ENCODE measurements at regions of chr19 and their contacts with region 1.

Region 1: DNA sequence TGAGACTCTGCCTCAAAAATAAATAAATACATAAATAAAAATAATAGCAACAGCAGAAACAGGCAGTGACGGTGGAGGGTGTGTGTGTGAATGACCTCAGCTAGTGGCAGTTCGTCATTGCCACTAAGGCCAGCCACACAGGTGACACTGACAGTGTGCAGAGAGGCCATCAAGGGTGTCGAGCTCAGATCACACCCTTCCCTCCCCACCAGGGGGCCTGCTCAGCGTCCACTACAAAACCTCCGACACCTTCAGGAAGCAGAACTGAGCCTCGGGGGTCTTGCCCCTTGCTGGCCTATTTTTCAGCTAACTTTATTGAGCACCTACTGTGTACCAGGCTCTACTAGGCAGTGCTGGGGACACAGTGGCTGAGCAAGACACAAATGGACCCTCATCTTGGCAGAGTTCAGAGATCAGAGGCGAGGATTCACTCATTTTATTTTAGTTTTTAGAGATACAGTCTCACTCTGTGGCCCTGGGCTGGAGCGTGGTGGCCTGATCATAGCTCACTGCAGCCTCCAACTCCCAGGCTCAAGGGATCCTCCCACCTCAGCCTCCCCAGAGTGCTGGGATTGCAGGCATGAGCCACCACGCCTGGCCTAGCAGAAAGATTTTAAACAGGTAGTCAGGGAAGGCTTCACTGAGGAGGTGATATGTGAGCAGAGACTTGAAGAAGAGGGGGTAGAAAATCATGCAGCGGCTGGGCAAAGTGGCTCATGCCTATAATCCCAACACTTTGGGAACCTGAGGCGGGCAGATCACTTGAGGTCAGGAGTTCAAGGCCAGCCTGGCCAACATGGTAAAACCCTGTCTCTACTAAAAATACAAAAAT is 30.3 kb upstream of the SEMA6B start:
- DNase-seq: peak; percentile 46
- H3K4me3 Mint-ChIP-seq: no peak overlapping the region
- H3K27ac Mint-ChIP-seq: no peak overlapping the region
- H3K4me1 Mint-ChIP-seq: no peaks in the 10 kb centered on the region
- H3K27me3 Mint-ChIP-seq: peaks cover 54% of the 10 kb centered on the region

Region 2: DNA sequence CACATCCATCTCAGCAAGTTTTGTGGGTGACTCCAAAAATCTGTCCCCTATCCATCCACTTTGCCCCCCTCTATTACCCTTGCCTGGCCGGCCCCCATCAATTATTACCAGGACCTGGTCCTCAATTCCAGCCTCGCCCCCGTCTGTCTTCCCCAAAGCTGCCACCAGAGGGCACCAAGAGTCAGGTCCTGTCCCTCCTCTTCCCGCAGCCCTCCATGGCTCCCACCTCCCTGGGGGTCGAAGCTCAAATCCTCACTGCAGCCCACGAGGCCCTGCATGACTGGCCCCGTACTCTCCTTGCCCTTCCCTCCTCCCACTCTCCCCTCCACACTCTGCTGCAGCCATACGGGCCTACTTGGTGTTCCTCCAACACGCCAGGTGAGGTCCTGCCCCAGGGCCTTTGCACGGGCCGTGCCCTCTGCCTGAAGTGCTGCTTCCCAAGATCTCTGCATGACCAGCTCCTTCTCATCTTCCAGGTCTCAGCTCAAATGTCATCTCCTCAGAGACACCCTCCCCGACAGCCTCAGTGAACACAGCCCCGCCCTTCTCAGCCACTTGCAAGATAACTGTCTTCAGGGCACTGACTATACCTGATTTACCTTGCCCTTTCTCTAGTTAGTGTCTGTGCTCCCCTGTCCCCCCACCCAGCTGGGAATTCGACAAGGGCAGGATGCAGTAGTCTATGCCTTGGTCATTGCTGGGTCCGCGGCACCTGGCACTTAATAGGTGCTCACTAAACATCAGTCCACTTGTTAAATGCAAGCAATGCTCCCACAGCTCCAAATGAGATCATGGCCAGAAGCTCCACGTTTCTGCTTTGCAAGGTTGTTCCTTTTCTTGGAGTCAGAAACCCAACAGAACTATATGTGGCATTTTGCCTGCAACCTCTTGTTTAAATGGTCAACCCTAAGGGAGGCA is 13.5 kb before region 1 on chr19:
- CTCF ChIA-PET with region 1: interaction called, 18 read pairs
- POLR2A ChIA-PET with region 1: no interaction called
- intact Hi-C with region 1: no loop called
- DNase-seq: peak; percentile 79
- H3K4me3 Mint-ChIP-seq: no peak overlapping the region
- H3K27ac Mint-ChIP-seq: no peak overlapping the region
- H3K4me1 Mint-ChIP-seq: no peaks in the 10 kb centered on the region
- H3K27me3 Mint-ChIP-seq: peaks cover 39% of the 10 kb centered on the region

Region 3: DNA sequence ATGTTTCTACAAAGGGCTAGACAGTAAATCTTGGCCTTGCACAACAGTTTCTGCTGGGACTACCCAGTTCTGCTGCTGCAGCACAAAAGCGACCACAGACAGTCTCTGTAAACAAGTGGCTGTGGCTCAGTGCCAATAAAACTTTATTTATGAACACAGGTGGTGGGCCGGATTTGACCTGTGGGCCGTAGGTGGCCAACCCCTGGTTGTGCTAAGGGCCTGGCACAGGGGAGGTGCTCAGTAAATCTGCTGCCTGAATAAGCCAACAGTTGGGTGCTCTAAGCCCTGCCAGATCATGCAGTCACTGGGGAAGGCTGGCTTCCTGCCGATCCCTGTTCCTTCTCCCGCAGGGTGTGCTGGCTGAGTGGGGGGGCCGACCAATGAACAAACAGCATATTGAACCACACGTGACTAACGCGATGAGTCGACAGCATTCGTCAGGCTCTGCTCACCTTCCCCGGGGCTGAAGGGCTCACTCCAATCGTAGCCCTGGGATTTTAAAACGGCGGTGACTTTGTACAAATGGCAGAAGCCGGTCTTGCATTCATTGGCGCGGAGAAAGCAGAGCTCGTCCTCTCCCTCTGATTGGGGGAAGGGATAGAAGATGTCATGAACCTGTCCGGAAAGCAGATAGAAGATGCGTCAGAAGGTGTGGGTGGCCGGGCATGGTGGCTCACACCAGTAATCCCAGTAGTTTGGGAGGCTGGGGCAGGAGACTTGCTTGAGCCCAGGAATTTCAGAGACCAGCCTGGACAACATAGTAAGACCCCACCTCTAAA is 104.6 kb after region 1 on chr19:
- CTCF ChIA-PET with region 1: no interaction called
- POLR2A ChIA-PET with region 1: no interaction called
- intact Hi-C with region 1: no loop called
- DNase-seq: no peak
- H3K4me3 Mint-ChIP-seq: no peak overlapping the region
- H3K27ac Mint-ChIP-seq: no peak overlapping the region
- H3K4me1 Mint-ChIP-seq: no peaks in the 10 kb centered on the region
- H3K27me3 Mint-ChIP-seq: no peaks in the 10 kb centered on the region

Measured in activated CD4-positive, alpha-beta memory T cell treated with anti-CD3 and anti-CD28 coated beads for 36 hours (primary cell).